ENCODE measurements at regions of chr7 and their contacts with region 1.

Region 1: DNA sequence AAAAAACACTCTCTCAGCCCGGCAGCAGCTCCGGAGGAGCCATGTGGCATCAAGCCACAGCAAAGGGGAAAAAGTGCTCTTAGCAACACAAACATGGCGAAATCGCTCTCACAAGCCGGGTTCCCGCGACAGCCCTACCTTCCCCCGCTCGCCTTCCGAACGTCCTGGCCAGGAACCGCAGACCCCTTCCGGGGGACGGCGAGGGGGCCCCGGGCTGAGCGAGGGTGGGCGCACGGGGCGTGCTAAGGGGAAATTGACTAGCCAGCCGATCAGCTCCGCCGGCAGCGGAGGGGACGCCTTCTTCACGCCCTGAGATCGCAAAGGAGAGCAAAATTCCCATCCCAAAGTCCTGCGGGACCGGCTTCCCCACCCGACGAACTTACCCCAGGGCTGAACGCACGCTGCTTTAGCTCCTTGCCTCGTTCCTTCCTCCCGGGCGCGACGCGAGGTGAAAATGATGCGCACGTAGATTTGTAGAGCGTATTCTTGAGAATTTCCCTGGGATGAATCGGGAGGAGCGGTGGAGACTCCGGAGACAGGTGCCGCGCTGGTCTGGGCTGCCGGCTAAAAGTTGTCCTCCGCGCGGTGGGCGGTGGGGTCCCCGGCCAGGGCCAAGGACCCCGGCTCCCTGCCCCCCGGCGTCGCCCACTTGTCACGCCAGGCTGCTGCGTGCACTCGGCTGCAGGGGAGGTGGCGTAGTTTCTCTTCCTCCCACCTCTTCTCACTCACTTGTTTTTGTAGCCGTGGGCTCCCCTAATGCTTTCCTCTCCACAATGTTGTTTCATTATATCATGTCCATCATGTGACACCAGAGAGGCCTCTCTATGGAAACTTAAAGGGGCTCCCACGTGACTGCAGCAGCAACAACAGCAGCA is 220.1 kb upstream of the MKLN1 start:
- DNase-seq: peak in 13 of 14 experiments; percentile 54 to 94 (median 67)
- ATAC-seq: peak; percentile 21
- H3K4me3 ChIP-seq: peak overlapping the region; percentile 97
- H3K4me3 Mint-ChIP-seq: peak overlapping the region; percentile 89
- H3K27ac ChIP-seq: peak overlapping the region; percentile 96 to 98
- H3K27ac Mint-ChIP-seq: peak overlapping the region; percentile 100
- H3K4me1 ChIP-seq: peaks cover 56% of the 10 kb centered on the region
- H3K4me1 Mint-ChIP-seq: peaks cover 72% of the 10 kb centered on the region
- H3K27me3 ChIP-seq: no peaks in the 10 kb centered on the region
- H3K27me3 Mint-ChIP-seq: peaks cover 7% of the 10 kb centered on the region
- CTCF ChIP-seq: peak; percentile 33

Region 2: GRCh38 chr7:131071786-131072504 is 35.6 kb before region 1 on chr7:
- CTCF ChIA-PET with region 1: interaction called, 7 read pairs
- POLR2A ChIA-PET with region 1: interaction called, 11 read pairs
- intact Hi-C with region 1: loop called (anchors 5 kb)
- DNase-seq: peak in 2 of 14 experiments; percentile 14 to 37
- ATAC-seq: no peak
- H3K4me3 ChIP-seq: no peak overlapping the region
- H3K4me3 Mint-ChIP-seq: no peak overlapping the region
- H3K27ac ChIP-seq: no peak overlapping the region
- H3K27ac Mint-ChIP-seq: peak overlapping the region; percentile 46
- H3K4me1 ChIP-seq: peaks cover 54% of the 10 kb centered on the region
- H3K4me1 Mint-ChIP-seq: peaks cover 38% of the 10 kb centered on the region
- H3K27me3 ChIP-seq: no peaks in the 10 kb centered on the region
- H3K27me3 Mint-ChIP-seq: no peaks in the 10 kb centered on the region
- CTCF ChIP-seq: peak; percentile 48

Region 3: GRCh38 chr7:131188367-131189339 is 81.1 kb after region 1 on chr7:
- CTCF ChIA-PET with region 1: interaction called, 7 read pairs
- POLR2A ChIA-PET with region 1: interaction called, 36 read pairs
- intact Hi-C with region 1: loop called (anchors 1 kb)
- DNase-seq: peak; percentile 16 to 91 (median 40)
- ATAC-seq: peak; percentile 86
- H3K4me3 ChIP-seq: no peak overlapping the region
- H3K4me3 Mint-ChIP-seq: peak overlapping the region; percentile 23
- H3K27ac ChIP-seq: peak overlapping the region in 1 of 2 donors; percentile 74
- H3K27ac Mint-ChIP-seq: peak overlapping the region; percentile 78
- H3K4me1 ChIP-seq: peaks cover 32% of the 10 kb centered on the region
- H3K4me1 Mint-ChIP-seq: peaks cover 28% of the 10 kb centered on the region
- H3K27me3 ChIP-seq: no peaks in the 10 kb centered on the region
- H3K27me3 Mint-ChIP-seq: no peaks in the 10 kb centered on the region
- CTCF ChIP-seq: no peak

Region 4: DNA sequence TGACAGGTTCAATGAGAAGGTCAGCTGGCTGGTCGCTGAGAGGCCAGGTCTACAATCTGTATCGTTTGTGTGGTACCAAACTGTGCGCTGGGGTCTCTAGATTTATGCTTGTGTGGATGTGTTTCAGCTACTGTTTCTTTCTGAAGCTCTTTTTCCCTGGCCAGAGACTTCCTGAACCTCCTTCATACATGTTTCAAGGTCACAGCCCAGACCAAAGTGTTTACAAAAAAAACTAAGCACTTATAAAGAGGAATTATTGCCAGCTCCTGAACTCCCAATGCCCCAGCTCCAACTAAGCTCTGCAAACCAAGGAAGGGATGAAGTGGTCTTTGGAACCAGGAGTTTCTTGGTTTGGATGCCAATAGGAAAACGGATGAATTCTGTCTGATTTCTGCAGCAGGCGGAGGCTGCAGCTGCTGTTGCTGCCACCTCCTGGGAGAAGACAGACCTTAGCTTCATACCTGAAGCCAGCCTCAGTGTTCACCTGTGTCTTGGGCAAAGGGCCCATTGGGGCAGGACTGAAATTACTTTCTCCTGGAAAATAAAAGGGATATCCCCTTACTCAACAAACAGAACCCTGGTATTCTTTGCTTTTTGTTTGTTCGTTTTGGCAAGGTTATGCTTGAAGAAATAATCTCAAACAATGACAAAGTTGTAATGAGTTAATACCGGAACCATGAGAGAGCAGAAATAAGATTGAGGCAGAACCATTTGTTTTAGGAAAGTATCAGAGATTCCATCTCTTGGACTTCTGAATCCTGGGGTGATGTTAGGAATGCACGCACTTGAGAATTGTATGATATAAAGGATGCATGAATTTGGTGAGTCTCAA is 195.5 kb after region 1 on chr7:
- CTCF ChIA-PET with region 1: interaction called, 10 read pairs
- POLR2A ChIA-PET with region 1: interaction called, 9 read pairs
- intact Hi-C with region 1: loop called in 1 of 2 experiments (anchors 2 kb)
- DNase-seq: peak in 13 of 14 experiments; percentile 12 to 64 (median 24)
- ATAC-seq: peak; percentile 65
- H3K4me3 ChIP-seq: no peak overlapping the region
- H3K4me3 Mint-ChIP-seq: no peak overlapping the region
- H3K27ac ChIP-seq: no peak overlapping the region
- H3K27ac Mint-ChIP-seq: no peak overlapping the region
- H3K4me1 ChIP-seq: no peaks in the 10 kb centered on the region
- H3K4me1 Mint-ChIP-seq: no peaks in the 10 kb centered on the region
- H3K27me3 ChIP-seq: no peaks in the 10 kb centered on the region
- H3K27me3 Mint-ChIP-seq: no peaks in the 10 kb centered on the region
- CTCF ChIP-seq: peak; percentile 70

Region 5: DNA sequence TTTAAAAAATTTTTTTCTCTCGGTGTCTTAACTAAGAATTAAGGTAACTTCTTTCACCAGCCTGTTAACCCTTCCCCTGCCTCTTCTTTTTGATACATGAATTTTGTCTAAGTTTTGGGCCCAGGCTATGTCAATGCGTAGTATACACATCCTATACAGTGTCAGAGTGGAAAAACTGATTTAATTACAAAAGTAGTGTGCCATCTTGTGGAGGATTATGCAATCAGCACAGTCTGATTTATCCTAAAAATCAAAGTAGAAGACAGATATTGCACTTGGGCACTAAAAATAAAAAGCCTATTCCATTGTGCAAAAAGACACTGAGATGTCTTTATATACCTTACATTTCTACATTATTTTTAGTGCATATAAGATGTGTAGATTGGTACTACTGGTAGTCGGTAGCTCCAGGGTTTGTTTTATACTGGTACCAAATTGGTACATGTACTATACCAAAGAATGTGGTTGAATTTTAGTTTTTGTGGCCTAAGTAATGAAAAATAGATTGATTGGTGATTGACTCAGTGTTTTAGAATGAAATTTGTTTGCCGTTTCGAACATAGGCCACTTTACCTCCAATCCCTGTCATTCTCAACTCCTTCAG is 316.7 kb after region 1 on chr7:
- CTCF ChIA-PET with region 1: interaction called, 3 read pairs
- POLR2A ChIA-PET with region 1: interaction called, 4 read pairs
- intact Hi-C with region 1: loop called in 1 of 2 experiments (anchors 5 kb)
- DNase-seq: peak in 4 of 14 experiments; percentile 17 to 62 (median 60)
- ATAC-seq: peak; percentile 93
- H3K4me3 ChIP-seq: no peak overlapping the region
- H3K4me3 Mint-ChIP-seq: no peak overlapping the region
- H3K27ac ChIP-seq: no peak overlapping the region
- H3K27ac Mint-ChIP-seq: no peak overlapping the region
- H3K4me1 ChIP-seq: no peaks in the 10 kb centered on the region
- H3K4me1 Mint-ChIP-seq: peaks cover 18% of the 10 kb centered on the region
- H3K27me3 ChIP-seq: no peaks in the 10 kb centered on the region
- H3K27me3 Mint-ChIP-seq: no peaks in the 10 kb centered on the region
- CTCF ChIP-seq: peak; percentile 64

Region 6: GRCh38 chr7:132592936-132593335 is 1485.4 kb after region 1 on chr7:
- CTCF ChIA-PET with region 1: no interaction called
- POLR2A ChIA-PET with region 1: no interaction called
- intact Hi-C with region 1: no loop called
- DNase-seq: no peak
- ATAC-seq: no peak
- H3K4me3 ChIP-seq: no peak overlapping the region
- H3K4me3 Mint-ChIP-seq: no peak overlapping the region
- H3K27ac ChIP-seq: no peak overlapping the region
- H3K27ac Mint-ChIP-seq: no peak overlapping the region
- H3K4me1 ChIP-seq: no peaks in the 10 kb centered on the region
- H3K4me1 Mint-ChIP-seq: no peaks in the 10 kb centered on the region
- H3K27me3 ChIP-seq: no peaks in the 10 kb centered on the region
- H3K27me3 Mint-ChIP-seq: peaks cover 10% of the 10 kb centered on the region
- CTCF ChIP-seq: no peak